Mammary epithelial cell (primary cell): ENCODE measurements at regions of chrX and their contacts with region 1.

Region 1: DNA sequence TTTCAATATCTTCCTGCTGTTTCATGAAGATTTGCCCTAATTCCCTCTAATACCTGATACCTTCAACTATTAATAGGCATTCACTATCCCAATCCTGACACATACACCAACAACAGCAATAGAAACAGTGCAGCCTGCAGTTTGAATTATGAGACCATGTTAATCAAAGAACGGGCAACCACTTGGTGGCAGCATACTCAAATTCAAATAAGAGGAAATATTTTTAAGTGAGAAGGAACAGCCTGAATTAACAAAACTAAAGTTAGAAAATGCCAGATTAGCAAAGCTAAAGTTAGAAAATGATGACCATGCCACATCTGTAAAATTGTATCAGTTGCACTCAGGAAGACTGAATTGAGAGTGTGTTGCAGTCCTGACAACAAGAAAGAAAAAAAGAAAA is 204.9 kb downstream of the SMARCA1 start:
- DNase-seq: peak; percentile 1
- H3K4me3 ChIP-seq: no peak overlapping the region
- H3K27ac ChIP-seq: no peak overlapping the region
- H3K4me1 ChIP-seq: no peaks in the 10 kb centered on the region
- H3K27me3 ChIP-seq: no peaks in the 10 kb centered on the region
- CTCF ChIP-seq: peak; percentile 29 to 37

Region 2: DNA sequence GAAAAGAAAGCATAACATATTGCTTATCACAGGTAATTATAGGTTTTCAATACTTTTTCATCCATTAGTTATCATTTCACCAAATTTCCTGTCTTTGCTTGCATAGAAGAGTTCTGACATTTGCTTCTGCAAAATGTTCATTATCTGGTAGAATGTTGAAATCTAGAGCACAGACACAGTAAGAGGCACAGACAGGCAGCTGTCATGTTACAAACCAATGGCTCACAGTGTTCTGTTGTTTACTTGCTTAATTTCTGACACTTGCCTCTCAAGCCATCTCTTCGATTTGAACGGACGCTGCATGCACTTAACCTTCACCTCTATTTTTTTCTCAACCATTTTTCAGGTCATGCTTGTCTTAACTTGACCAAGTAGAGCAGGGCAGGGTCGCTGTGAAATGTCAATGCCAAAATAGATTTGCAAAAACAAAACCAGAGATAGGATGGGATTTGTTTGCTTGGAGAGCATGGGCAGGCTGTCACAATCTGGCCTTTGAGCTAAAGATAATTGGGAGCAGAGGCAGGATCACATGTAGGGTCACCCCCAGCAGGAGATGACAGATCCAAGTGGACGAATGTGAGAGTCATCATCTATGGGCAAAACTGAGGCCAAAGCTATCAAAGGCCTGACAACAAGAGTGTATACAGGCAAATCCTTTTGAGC is 87.4 kb before region 1 on chrX:
- CTCF ChIA-PET with region 1: no interaction called
- dilution Hi-C with region 1: no loop called
- in situ Hi-C with region 1: no loop called
- intact Hi-C with region 1: no loop called
- DNase-seq: no peak
- H3K4me3 ChIP-seq: no peak overlapping the region
- H3K27ac ChIP-seq: no peak overlapping the region
- H3K4me1 ChIP-seq: no peaks in the 10 kb centered on the region
- H3K27me3 ChIP-seq: no peaks in the 10 kb centered on the region
- CTCF ChIP-seq: no peak

Region 3: GRCh38 chrX:129360175-129360574 is 41.8 kb after region 1 on chrX:
- CTCF ChIA-PET with region 1: no interaction called
- dilution Hi-C with region 1: no loop called
- in situ Hi-C with region 1: no loop called
- intact Hi-C with region 1: loop called (anchors 1 kb)
- DNase-seq: peak; percentile 34
- H3K4me3 ChIP-seq: no peak overlapping the region
- H3K27ac ChIP-seq: no peak overlapping the region
- H3K4me1 ChIP-seq: no peaks in the 10 kb centered on the region
- H3K27me3 ChIP-seq: no peaks in the 10 kb centered on the region
- CTCF ChIP-seq: peak; percentile 53 to 62

Region 4: GRCh38 chrX:129427267-129427666 is 108.9 kb after region 1 on chrX:
- CTCF ChIA-PET with region 1: no interaction called
- dilution Hi-C with region 1: no loop called
- in situ Hi-C with region 1: no loop called
- intact Hi-C with region 1: no loop called
- DNase-seq: no peak
- H3K4me3 ChIP-seq: no peak overlapping the region
- H3K27ac ChIP-seq: no peak overlapping the region
- H3K4me1 ChIP-seq: no peaks in the 10 kb centered on the region
- H3K27me3 ChIP-seq: no peaks in the 10 kb centered on the region
- CTCF ChIP-seq: no peak